ENCODE measurements at regions of chr2 and their contacts with region 1.

Region 1: GRCh38 chr2:52810460-52810859 is 957.1 kb upstream of the CHAC2 start:
- DNase-seq: peak; percentile 42
- H3K4me3 ChIP-seq: no peak overlapping the region
- H3K27ac ChIP-seq: no peak overlapping the region
- H3K4me1 ChIP-seq: no peaks in the 10 kb centered on the region
- H3K27me3 ChIP-seq: no peaks in the 10 kb centered on the region
- CTCF ChIP-seq: peak; percentile 23 to 66

Region 2: DNA sequence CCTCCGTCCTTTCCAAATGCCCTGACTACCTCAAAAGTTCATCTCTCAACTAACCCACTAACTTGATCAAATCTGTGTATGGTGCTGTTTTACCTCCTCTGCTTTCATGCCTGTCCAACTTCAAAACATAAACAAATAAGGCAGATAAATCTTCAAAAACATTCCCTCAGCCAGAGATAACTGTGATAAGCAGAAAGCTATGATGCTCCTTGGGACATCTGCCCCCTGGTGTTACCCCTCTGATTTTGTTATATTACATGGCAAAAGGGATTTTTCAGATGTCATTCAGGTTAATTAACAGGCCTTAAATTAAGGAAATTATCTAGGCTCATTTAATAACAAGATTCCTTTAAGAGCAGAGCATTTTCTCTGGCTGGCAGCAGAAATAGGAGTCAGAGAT is 146.3 kb after region 1 on chr2:
- CTCF ChIA-PET with region 1: no interaction called
- dilution Hi-C with region 1: no loop called
- in situ Hi-C with region 1: loop called in 1 of 2 experiments (anchors 25 kb)
- intact Hi-C with region 1: loop called (anchors 5 kb)
- DNase-seq: no peak
- H3K4me3 ChIP-seq: no peak overlapping the region
- H3K27ac ChIP-seq: no peak overlapping the region
- H3K4me1 ChIP-seq: no peaks in the 10 kb centered on the region
- H3K27me3 ChIP-seq: no peaks in the 10 kb centered on the region
- CTCF ChIP-seq: peak in 1 of 2 donors; percentile 12

Region 3: GRCh38 chr2:52976253-52976949 is 165.9 kb after region 1 on chr2:
- CTCF ChIA-PET with region 1: interaction called, 5 read pairs
- dilution Hi-C with region 1: no loop called
- in situ Hi-C with region 1: loop called (anchors 10 to 25 kb)
- intact Hi-C with region 1: loop called (anchors 1 kb)
- DNase-seq: peak; percentile 40
- H3K4me3 ChIP-seq: no peak overlapping the region
- H3K27ac ChIP-seq: no peak overlapping the region
- H3K4me1 ChIP-seq: no peaks in the 10 kb centered on the region
- H3K27me3 ChIP-seq: no peaks in the 10 kb centered on the region
- CTCF ChIP-seq: peak; percentile 75 to 86

Region 4: DNA sequence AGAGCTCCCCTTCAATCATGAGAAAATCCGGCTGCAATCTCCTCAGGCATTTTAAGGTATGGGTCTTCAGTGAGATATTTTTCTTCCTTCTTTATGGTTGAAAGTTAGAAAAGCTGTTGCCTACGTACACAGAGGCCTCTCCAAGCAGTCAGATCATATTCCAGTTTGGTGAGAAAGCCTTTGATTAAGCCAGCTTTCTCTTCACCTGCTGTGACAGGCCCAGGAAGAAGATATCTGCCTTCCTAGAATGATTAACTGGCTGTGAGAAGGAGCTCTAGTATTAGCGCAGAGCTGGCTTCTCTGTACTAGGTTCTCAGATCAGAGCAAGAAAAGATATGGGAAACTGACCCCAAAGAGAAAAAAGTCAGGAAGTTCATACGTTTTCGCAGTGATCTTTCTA is 372.1 kb after region 1 on chr2:
- CTCF ChIA-PET with region 1: no interaction called
- dilution Hi-C with region 1: no loop called
- in situ Hi-C with region 1: loop called (anchors 25 kb)
- intact Hi-C with region 1: no loop called
- DNase-seq: peak; percentile 1
- H3K4me3 ChIP-seq: no peak overlapping the region
- H3K27ac ChIP-seq: no peak overlapping the region
- H3K4me1 ChIP-seq: no peaks in the 10 kb centered on the region
- H3K27me3 ChIP-seq: no peaks in the 10 kb centered on the region
- CTCF ChIP-seq: no peak

Region 5: DNA sequence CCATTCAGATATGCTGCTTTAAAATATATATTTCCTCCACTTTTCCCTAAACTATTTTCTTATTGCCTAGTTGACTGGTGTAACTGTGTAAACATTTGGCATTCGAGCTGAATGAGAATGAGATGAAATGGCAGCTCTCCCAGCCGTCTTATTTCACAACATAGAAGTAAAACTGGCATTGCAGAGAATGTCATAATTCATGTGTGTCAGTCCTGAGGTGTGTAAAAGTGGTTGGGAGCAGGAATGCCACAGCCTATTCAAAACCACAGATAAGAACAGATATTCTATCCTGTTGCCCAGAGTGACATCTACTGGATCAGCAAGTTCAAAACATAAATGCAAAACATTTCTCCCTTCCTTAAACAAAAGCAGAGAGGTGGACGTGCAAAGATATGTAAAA is 391.6 kb after region 1 on chr2:
- CTCF ChIA-PET with region 1: no interaction called
- dilution Hi-C with region 1: no loop called
- in situ Hi-C with region 1: loop called (anchors 25 kb)
- intact Hi-C with region 1: loop called (anchors 1 kb)
- DNase-seq: peak; percentile 91
- H3K4me3 ChIP-seq: no peak overlapping the region
- H3K27ac ChIP-seq: no peak overlapping the region
- H3K4me1 ChIP-seq: peaks cover 4% of the 10 kb centered on the region
- H3K27me3 ChIP-seq: no peaks in the 10 kb centered on the region
- CTCF ChIP-seq: peak; percentile 43 to 63

Region 6: GRCh38 chr2:53445386-53446072 is 635.1 kb after region 1 on chr2:
- CTCF ChIA-PET with region 1: no interaction called
- dilution Hi-C with region 1: no loop called
- in situ Hi-C with region 1: no loop called
- intact Hi-C with region 1: loop called (anchors 10 kb)
- DNase-seq: peak; percentile 55
- H3K4me3 ChIP-seq: no peak overlapping the region
- H3K27ac ChIP-seq: no peak overlapping the region
- H3K4me1 ChIP-seq: peaks cover 6% of the 10 kb centered on the region
- H3K27me3 ChIP-seq: no peaks in the 10 kb centered on the region
- CTCF ChIP-seq: no peak

Region 7: DNA sequence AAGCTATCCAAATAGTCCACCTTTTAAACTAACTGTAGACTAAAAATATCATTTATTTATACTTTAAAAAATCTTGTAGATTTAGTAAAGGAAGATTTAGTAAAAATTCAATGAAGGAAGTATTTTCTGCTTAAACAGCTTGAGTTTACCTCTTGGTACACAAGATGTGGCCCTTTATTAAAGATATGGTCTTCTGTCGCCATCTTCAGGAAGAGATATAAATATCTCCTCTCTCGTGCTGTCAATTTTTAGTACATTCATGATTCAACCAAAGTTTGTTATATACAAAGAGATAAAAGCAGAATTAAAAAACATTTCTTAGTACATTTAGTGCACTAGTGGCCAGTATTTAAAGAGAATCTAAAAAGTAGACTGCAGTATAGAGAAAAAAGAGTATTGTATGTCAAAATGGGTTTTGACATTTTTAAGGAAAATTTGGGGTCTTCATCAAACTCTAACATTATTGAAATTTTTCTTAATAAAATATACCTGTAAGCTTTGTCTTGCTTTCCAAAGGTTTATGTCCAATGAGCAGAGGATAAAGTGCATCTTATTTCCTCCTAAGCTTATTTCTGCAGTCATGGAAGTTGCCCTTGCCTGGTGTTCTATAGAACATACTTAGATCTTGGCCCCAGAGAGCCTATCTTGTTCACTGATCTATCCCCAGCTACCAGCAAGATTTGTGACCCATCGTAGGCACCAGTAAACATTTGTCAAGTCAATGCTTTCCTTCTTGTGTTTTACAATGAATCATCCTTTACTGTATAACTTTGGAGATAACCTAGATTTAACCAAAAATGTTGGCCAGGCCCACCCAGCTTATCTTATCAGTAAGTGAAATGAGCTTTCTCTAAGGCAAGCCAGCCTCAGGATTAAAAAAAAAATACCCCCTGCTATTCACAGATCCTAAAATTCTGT is 1894.5 kb after region 1 on chr2:
- CTCF ChIA-PET with region 1: no interaction called
- dilution Hi-C with region 1: no loop called
- in situ Hi-C with region 1: no loop called
- intact Hi-C with region 1: loop called (anchors 10 kb)
- DNase-seq: peak; percentile 40
- H3K4me3 ChIP-seq: no peak overlapping the region
- H3K27ac ChIP-seq: no peak overlapping the region
- H3K4me1 ChIP-seq: peaks cover 11% of the 10 kb centered on the region
- H3K27me3 ChIP-seq: no peaks in the 10 kb centered on the region
- CTCF ChIP-seq: peak; percentile 35 to 57

Measured in mammary epithelial cell (primary cell).